Ascending aorta (tissue), 2 donors: ENCODE measurements at regions of chr2 and their contacts with region 1.

Region 1: GRCh38 chr2:176088048-176088936 is 4.2 kb upstream of the HOXD13 start:
- DNase-seq: peak in 1 of 2 donors; percentile 79
- H3K4me3 ChIP-seq: peak overlapping the region; percentile 3 to 53
- H3K27ac ChIP-seq: no peak overlapping the region
- H3K4me1 ChIP-seq: peaks cover 3 to 5% of the 10 kb centered on the region in 2 donors
- H3K27me3 ChIP-seq: peaks cover 70% of the 10 kb centered on the region
- CTCF ChIP-seq: peak; percentile 65 to 93 (median 93)

Region 2: DNA sequence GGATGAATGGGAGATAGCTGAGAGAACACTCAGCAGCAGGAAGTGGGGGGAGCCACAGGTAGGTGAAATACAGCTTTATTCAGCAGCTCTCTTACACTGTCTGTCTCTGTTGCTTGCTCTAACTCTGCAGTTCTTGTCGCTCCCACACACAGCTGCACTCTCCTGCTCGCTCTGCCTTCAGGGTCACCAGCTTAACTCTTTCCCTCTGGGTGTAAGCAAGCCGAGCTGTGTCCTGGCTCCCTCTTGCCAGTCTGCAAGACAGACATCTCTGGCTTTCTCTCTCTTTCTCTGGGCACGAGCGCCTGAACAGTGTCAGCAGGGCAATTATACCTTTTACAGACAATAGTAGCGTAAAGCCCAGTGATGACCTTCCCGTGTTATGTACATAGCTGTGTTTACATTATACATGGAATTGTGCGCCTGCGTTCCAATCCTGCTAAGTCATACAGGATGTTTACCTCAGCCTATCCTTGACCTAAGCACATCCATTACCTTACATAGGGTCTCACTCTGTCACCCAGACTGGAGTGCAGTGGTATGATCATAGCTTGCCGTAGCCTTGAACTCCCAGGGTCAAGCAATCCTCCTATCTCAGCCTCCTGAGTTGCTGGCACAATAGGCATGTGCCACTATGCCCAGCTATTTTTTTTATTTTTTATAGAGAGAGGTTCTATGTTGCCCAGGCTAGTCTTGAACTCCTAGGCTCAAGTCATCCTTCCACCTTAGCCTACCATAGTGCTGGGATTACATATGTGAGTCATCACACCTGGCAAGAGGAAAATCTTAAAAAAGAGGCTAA is 1025.3 kb before region 1 on chr2:
- intact Hi-C with region 1: no loop called
- DNase-seq: no peak
- H3K4me3 ChIP-seq: no peak overlapping the region
- H3K27ac ChIP-seq: no peak overlapping the region
- H3K4me1 ChIP-seq: no peaks in the 10 kb centered on the region
- H3K27me3 ChIP-seq: no peaks in the 10 kb centered on the region
- CTCF ChIP-seq: no peak

Region 3: GRCh38 chr2:175690113-175690837 is 398.0 kb before region 1 on chr2:
- intact Hi-C with region 1: loop called (anchors 1 kb)
- DNase-seq: no peak
- H3K4me3 ChIP-seq: no peak overlapping the region
- H3K27ac ChIP-seq: no peak overlapping the region
- H3K4me1 ChIP-seq: no peaks in the 10 kb centered on the region
- H3K27me3 ChIP-seq: no peaks in the 10 kb centered on the region
- CTCF ChIP-seq: peak; percentile 45 to 73 (median 64)

Region 4: GRCh38 chr2:176001916-176002687 is 86.2 kb before region 1 on chr2 and contains the start of gene LNPK:
- intact Hi-C with region 1: loop called (anchors 5 kb)
- DNase-seq: peak; percentile 73 to 96
- H3K4me3 ChIP-seq: peak within 1 kb of the TSS; percentile 73 to 91
- H3K27ac ChIP-seq: peak within 1 kb of the TSS; percentile 82 to 85
- H3K4me1 ChIP-seq: peaks cover 0 to 6% of the 10 kb centered on the region in 2 donors
- H3K27me3 ChIP-seq: no peaks in the 10 kb centered on the region
- CTCF ChIP-seq: no peak
- total RNA-seq, gene LNPK: 7.1 TPM